ENCODE measurements at regions of chr14 and their contacts with region 1.

Region 1: DNA sequence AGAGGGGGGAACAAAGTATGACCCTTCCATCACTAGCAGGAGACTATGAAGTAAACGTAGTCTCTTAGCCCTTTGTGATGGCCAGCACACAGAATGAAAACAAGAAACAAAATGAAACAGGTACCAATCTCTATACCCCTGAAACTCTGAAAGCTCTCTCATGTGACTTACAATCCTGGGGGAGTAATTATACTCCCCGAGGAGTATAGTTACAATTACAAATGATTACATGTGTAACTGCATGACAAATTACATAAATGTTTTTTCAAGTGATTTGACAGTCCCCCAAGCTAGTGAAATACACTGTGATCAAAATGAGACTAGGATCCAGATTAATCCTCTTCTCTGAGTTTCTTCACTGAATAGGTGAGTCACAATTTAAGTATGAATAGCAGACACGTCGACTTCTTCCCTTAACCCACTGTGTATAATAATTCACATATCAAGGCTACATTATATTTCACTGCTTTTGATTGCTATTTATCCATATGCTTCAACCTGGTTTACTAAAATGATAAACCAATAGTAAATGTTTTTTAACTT is 74.0 kb downstream of the SPTSSA start:
- DNase-seq: no peak
- H3K4me3 ChIP-seq: no peak overlapping the region
- H3K27ac ChIP-seq: no peak overlapping the region
- H3K4me1 ChIP-seq: no peaks in the 10 kb centered on the region
- H3K27me3 ChIP-seq: no peaks in the 10 kb centered on the region
- CTCF ChIP-seq: no peak
- POLR2A ChIP-seq: no peak

Region 2: GRCh38 chr14:34322940-34323418 is 65.1 kb before region 1 on chr14:
- CTCF ChIA-PET with region 1: no interaction called
- POLR2A ChIA-PET with region 1: no interaction called
- dilution Hi-C with region 1: no loop called
- intact Hi-C with region 1: no loop called
- DNase-seq: peak; percentile 57
- H3K4me3 ChIP-seq: no peak overlapping the region
- H3K27ac ChIP-seq: no peak overlapping the region
- H3K4me1 ChIP-seq: no peaks in the 10 kb centered on the region
- H3K27me3 ChIP-seq: peaks cover 5 to 11% of the 10 kb centered on the region in 2 experiments
- CTCF ChIP-seq: peak; percentile 69 to 72
- POLR2A ChIP-seq: no peak

Region 3: GRCh38 chr14:34439090-34439489 is 51.0 kb after region 1 on chr14:
- CTCF ChIA-PET with region 1: no interaction called
- POLR2A ChIA-PET with region 1: interaction called, 11 read pairs
- dilution Hi-C with region 1: no loop called
- intact Hi-C with region 1: no loop called
- DNase-seq: no peak
- H3K4me3 ChIP-seq: no peak overlapping the region
- H3K27ac ChIP-seq: no peak overlapping the region
- H3K4me1 ChIP-seq: peaks cover 14% of the 10 kb centered on the region
- H3K27me3 ChIP-seq: no peaks in the 10 kb centered on the region
- CTCF ChIP-seq: no peak
- POLR2A ChIP-seq: no peak

Region 4: GRCh38 chr14:34450542-34450915 is 62.5 kb after region 1 on chr14:
- CTCF ChIA-PET with region 1: no interaction called
- POLR2A ChIA-PET with region 1: no interaction called
- dilution Hi-C with region 1: no loop called
- intact Hi-C with region 1: no loop called
- DNase-seq: peak; percentile 20
- H3K4me3 ChIP-seq: no peak overlapping the region
- H3K27ac ChIP-seq: peak overlapping the region; percentile 18
- H3K4me1 ChIP-seq: peaks cover 9% of the 10 kb centered on the region
- H3K27me3 ChIP-seq: no peaks in the 10 kb centered on the region
- CTCF ChIP-seq: no peak
- POLR2A ChIP-seq: no peak

Measured in endothelial cell of umbilical vein (primary cell).